PC-9 (cell line): ENCODE measurements at regions of chr1 and their contacts with region 1.

Region 1: DNA sequence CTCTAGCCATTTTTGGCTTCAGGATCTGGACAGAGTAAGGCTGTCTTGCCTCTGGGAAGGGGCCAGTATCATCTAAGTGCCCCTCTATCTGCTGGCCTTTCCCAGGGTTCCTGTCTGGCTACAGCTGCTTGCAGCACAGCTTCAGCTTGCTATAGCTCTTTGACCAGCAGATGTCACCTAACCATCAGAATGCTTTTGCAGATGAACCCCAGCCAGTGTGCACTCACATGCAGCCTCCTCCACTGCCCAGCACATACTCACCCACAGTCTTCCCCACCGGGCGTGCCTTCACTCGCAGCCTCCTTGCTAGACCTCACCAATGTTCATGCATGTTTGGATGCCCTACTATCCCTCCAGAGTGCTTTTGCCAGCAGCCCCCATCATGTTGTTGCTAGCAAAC is 769.0 kb downstream of the BRINP3 start:
- DNase-seq: no peak
- H3K4me3 ChIP-seq: no peak overlapping the region
- H3K27ac ChIP-seq: no peak overlapping the region
- H3K4me1 ChIP-seq: no peaks in the 10 kb centered on the region
- H3K27me3 ChIP-seq: no peaks in the 10 kb centered on the region
- CTCF ChIP-seq: no peak

Region 2: DNA sequence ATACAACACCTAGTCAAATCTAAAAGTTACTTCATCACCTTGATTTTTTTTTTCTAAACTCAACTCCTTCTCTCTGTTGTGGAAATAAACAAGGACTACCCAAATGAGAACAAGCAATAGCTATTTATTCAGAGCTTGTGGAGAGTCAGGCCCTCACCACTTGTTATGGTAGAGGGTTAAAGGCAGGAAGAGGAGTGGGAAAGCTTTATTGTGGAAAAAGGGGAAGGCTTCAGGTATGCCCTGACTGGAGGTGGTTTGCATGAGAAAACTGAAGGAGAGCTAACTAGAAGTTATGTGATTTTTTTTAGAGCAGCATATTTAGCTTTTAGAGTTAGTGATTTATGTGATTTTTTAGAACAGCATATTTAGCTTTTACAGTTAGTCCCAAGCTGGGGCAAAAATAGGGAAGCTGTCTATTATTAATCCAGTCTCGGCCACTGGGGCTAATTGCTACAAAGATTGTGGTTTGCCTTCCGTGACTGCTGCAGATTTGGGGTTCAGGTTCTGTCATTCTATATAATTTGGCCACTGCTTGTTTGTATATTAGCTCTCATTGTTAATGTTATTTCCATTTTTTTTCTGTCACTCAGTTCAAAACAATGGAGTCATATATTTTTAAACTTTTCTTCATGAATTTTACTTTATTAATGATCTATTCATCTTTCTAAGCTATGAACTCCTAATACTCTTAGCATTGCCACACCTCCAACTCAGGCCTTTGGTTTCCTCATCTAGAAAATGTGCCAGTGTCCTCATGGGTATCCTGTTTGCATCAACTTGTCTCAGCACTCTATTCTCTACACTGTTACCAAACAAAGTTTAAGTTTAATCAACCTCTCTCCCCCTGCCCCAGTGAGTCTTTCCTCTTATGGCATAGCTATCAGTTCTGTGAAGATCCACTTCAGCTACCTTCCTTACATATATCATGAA is 56.0 kb after region 1 on chr1:
- CTCF ChIA-PET with region 1: no interaction called
- POLR2A ChIA-PET with region 1: no interaction called
- intact Hi-C with region 1: no loop called
- DNase-seq: no peak
- H3K4me3 ChIP-seq: no peak overlapping the region
- H3K27ac ChIP-seq: no peak overlapping the region
- H3K4me1 ChIP-seq: no peaks in the 10 kb centered on the region
- H3K27me3 ChIP-seq: no peaks in the 10 kb centered on the region
- CTCF ChIP-seq: no peak

Region 3: GRCh38 chr1:190320952-190321351 is 612.3 kb after region 1 on chr1:
- CTCF ChIA-PET with region 1: no interaction called
- POLR2A ChIA-PET with region 1: no interaction called
- intact Hi-C with region 1: loop called (anchors 10 kb)
- DNase-seq: peak in 1 of 2 experiments; percentile 10
- H3K4me3 ChIP-seq: no peak overlapping the region
- H3K27ac ChIP-seq: no peak overlapping the region
- H3K4me1 ChIP-seq: no peaks in the 10 kb centered on the region
- H3K27me3 ChIP-seq: no peaks in the 10 kb centered on the region
- CTCF ChIP-seq: peak; percentile 54